CD4-positive, alpha-beta memory T cell (primary cell): ENCODE measurements at regions of chr2 and their contacts with region 1.

Region 1: GRCh38 chr2:181123798-181124231 is 143.4 kb downstream of the UBE2E3 start:
- DNase-seq: peak; percentile 78 to 89 (median 87)
- H3K4me3 ChIP-seq: peak overlapping the region in 1 of 2 donors; percentile 36
- H3K4me3 Mint-ChIP-seq: peak overlapping the region; percentile 76 to 90 (median 80)
- H3K27ac ChIP-seq: peak overlapping the region; percentile 78
- H3K27ac Mint-ChIP-seq: peak overlapping the region; percentile 96 to 99 (median 97)
- H3K4me1 ChIP-seq: peaks cover 83% of the 10 kb centered on the region
- H3K4me1 Mint-ChIP-seq: peaks cover 43 to 76% (median 50%) of the 10 kb centered on the region in 4 donors
- H3K27me3 ChIP-seq: no peaks in the 10 kb centered on the region
- H3K27me3 Mint-ChIP-seq: no peaks in the 10 kb centered on the region

Region 2: DNA sequence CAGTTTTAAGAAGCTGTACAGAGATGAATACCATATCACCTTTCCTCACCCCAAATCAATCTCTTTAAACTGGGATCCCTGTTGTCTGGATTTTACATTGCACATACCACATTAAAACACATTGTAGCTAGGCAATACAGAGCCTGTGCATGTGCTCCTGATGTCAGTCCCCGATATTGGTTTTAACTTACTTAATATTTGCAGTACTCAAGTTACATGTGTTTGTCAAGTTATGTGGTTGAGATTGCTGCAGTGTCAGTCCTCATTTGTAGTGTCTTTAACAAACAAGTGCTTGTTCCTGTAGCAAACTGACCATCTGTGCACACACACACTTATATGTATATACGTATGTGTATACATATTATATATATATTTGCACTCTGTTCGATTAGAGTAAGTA is 153.8 kb before region 1 on chr2:
- CTCF ChIA-PET with region 1: no interaction called
- POLR2A ChIA-PET with region 1: no interaction called
- intact Hi-C with region 1: no loop called
- DNase-seq: no peak
- H3K4me3 ChIP-seq: no peak overlapping the region
- H3K4me3 Mint-ChIP-seq: no peak overlapping the region
- H3K27ac ChIP-seq: no peak overlapping the region
- H3K27ac Mint-ChIP-seq: no peak overlapping the region
- H3K4me1 ChIP-seq: no peaks in the 10 kb centered on the region
- H3K4me1 Mint-ChIP-seq: no peaks in the 10 kb centered on the region
- H3K27me3 ChIP-seq: no peaks in the 10 kb centered on the region
- H3K27me3 Mint-ChIP-seq: peaks cover 3 to 5% of the 10 kb centered on the region in 2 donors

Region 3: DNA sequence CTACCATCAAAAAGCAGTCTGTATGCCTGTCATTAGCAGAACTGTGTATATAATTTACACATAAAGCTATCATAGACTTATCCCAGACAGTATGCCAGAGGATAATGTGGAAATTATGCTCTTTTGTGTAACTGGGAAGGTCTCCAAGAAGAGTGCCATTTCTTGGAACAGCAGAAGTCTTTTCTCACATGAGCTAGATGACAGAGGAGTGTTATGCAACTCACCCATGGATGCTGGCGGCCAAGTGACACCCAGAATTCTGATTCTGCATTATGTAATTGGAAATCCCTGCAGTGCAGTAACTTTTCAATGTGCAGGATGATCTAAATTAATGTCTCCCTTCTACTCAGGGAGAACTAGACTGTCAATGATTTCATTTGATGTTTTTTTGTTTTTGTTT is 16.6 kb after region 1 on chr2:
- CTCF ChIA-PET with region 1: interaction called, 11 read pairs
- POLR2A ChIA-PET with region 1: interaction called, 296 read pairs
- intact Hi-C with region 1: loop called (anchors 1 kb)
- DNase-seq: peak in 1 of 5 donors; percentile 66
- H3K4me3 ChIP-seq: no peak overlapping the region
- H3K4me3 Mint-ChIP-seq: peak overlapping the region in 7 of 8 donors; percentile 61 to 91 (median 82)
- H3K27ac ChIP-seq: peak overlapping the region; percentile 74
- H3K27ac Mint-ChIP-seq: peak overlapping the region; percentile 86 to 99 (median 98)
- H3K4me1 ChIP-seq: peaks cover 72% of the 10 kb centered on the region
- H3K4me1 Mint-ChIP-seq: peaks cover 44 to 78% (median 58%) of the 10 kb centered on the region in 4 donors
- H3K27me3 ChIP-seq: no peaks in the 10 kb centered on the region
- H3K27me3 Mint-ChIP-seq: no peaks in the 10 kb centered on the region

Region 4: GRCh38 chr2:181165199-181165868 is 41.5 kb after region 1 on chr2:
- CTCF ChIA-PET with region 1: no interaction called
- POLR2A ChIA-PET with region 1: interaction called, 18 read pairs
- intact Hi-C with region 1: loop called (anchors 2 kb)
- DNase-seq: peak in 3 of 5 donors; percentile 53 to 57 (median 57)
- H3K4me3 ChIP-seq: peak overlapping the region in 1 of 2 donors; percentile 42
- H3K4me3 Mint-ChIP-seq: peak overlapping the region in 7 of 8 donors; percentile 45 to 83 (median 78)
- H3K27ac ChIP-seq: peak overlapping the region; percentile 53
- H3K27ac Mint-ChIP-seq: peak overlapping the region; percentile 88 to 98 (median 95)
- H3K4me1 ChIP-seq: peaks cover 50% of the 10 kb centered on the region
- H3K4me1 Mint-ChIP-seq: peaks cover 33 to 66% (median 50%) of the 10 kb centered on the region in 4 donors
- H3K27me3 ChIP-seq: no peaks in the 10 kb centered on the region
- H3K27me3 Mint-ChIP-seq: no peaks in the 10 kb centered on the region

Region 5: GRCh38 chr2:181223234-181223633 is 99.4 kb after region 1 on chr2:
- CTCF ChIA-PET with region 1: no interaction called
- POLR2A ChIA-PET with region 1: interaction called, 19 read pairs
- intact Hi-C with region 1: loop called (anchors 5 kb)
- DNase-seq: peak in 4 of 5 donors; percentile 35 to 63 (median 48)
- H3K4me3 ChIP-seq: no peak overlapping the region
- H3K4me3 Mint-ChIP-seq: peak overlapping the region in 7 of 8 donors; percentile 53 to 86 (median 65)
- H3K27ac ChIP-seq: peak overlapping the region; percentile 61
- H3K27ac Mint-ChIP-seq: peak overlapping the region; percentile 88 to 99 (median 94)
- H3K4me1 ChIP-seq: peaks cover 37% of the 10 kb centered on the region
- H3K4me1 Mint-ChIP-seq: peaks cover 22 to 40% (median 29%) of the 10 kb centered on the region in 4 donors
- H3K27me3 ChIP-seq: no peaks in the 10 kb centered on the region
- H3K27me3 Mint-ChIP-seq: no peaks in the 10 kb centered on the region